Lower lobe of right lung (tissue), 2 donors: ENCODE measurements at regions of chr6 and their contacts with region 1.

Region 1: DNA sequence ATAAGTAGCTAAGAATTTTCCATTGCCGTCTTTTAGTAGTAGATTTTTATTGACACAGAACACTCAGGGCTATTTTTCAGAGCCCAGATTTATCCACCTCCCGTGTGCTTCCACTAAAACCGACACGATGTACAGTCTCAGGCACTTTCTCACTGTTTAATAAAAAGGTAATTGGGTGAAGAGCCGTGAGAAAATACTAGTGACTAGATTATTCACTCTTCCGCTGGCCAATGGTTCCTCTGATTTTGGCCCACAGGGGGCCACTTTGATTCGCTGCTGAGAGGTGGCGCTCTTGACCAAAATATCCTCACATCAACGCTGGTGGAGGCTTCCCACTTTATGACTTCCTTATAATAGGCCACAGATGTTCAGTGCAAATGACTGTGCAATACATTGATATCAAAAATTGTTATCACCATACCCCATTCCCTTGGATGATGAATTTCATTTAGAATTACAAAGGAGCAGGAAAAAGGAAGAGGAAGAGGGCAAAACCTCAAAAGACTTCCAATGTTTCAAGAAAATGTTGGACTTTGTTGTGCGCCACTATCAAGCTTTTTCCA is 12.3 kb upstream of the HDDC2 start:
- DNase-seq: no peak
- ATAC-seq: peak; percentile 85 to 90
- H3K4me3 ChIP-seq: no peak overlapping the region
- H3K27ac ChIP-seq: no peak overlapping the region
- H3K4me1 ChIP-seq: no peaks in the 10 kb centered on the region
- H3K27me3 ChIP-seq: no peaks in the 10 kb centered on the region
- CTCF ChIP-seq: peak; percentile 79

Region 2: DNA sequence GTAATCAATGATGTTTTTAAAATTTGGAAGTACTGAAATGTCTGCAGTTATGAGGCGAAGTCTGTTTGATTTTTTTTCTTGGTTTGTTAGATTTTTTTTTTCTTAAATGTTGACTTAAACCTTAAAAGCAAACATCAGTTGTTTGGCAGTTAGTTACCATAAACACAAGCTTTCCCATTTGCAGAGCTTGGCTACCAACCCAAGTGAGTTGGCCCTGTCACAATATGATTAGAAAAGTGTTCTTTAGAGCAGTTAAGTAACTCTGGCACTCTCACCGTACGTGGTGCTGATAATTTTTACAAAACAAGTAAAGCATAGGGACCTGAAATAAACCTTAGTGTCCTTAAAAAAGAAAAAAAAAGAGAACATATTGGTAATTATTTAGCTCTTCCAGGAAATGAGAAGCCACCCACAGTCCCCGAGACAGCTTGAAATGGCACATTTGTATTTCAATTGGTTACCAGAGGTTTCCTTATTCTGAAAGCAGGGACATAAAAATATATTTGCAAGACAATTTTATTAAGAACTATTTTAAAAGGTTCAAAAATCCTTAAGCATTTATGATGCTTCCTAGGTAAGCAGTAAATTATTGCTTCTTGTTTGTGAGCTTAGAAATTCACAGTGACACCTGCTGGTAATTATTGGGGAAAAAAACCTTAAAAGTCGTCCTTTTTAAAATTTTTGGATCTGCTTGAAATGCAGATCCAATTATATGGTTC is 439.3 kb after region 1 on chr6:
- intact Hi-C with region 1: loop called (anchors 5 kb)
- DNase-seq: no peak
- ATAC-seq: no peak
- H3K4me3 ChIP-seq: no peak overlapping the region
- H3K27ac ChIP-seq: no peak overlapping the region
- H3K4me1 ChIP-seq: peaks cover 21% of the 10 kb centered on the region
- H3K27me3 ChIP-seq: peaks cover 55% of the 10 kb centered on the region
- CTCF ChIP-seq: peak; percentile 51